Activated T-helper 2 cell treated with anti-CD3 and anti-CD28 coated beads, Interferon-gamma antibody, Interleukin-2, Interleukin-4, amounts not matched to agents 10 μg/mL and 5 μg/mL and 100 μg/mL, durations not matched to agents 14 hours and 24 hours and 36 hours (primary cell): ENCODE measurements at regions of chr6 and their contacts with region 1.

Region 1: GRCh38 chr6:170584181-170584953 is at the start of gene PDCD2:
- DNase-seq: peak; percentile 89
- H3K4me3 Mint-ChIP-seq: peak within 1 kb of the TSS; percentile 99
- H3K27ac Mint-ChIP-seq: peak within 1 kb of the TSS; percentile 90
- H3K4me1 Mint-ChIP-seq: peaks cover 28% of the 10 kb centered on the region
- H3K27me3 Mint-ChIP-seq: peaks cover 3% of the 10 kb centered on the region
- total RNA-seq, gene PDCD2: 117 and 124 TPM in 2 replicates

Region 2: GRCh38 chr6:170022971-170023619 is 561.3 kb before region 1 on chr6:
- intact Hi-C with region 1: no loop called
- DNase-seq: no peak
- H3K4me3 Mint-ChIP-seq: no peak overlapping the region
- H3K27ac Mint-ChIP-seq: no peak overlapping the region
- H3K4me1 Mint-ChIP-seq: no peaks in the 10 kb centered on the region
- H3K27me3 Mint-ChIP-seq: peaks cover 11% of the 10 kb centered on the region

Region 3: GRCh38 chr6:170306324-170307079 is 277.9 kb before region 1 on chr6 and contains the start of gene FAM120B:
- intact Hi-C with region 1: loop called (anchors 5 kb)
- DNase-seq: peak; percentile 96
- H3K4me3 Mint-ChIP-seq: peak within 1 kb of the TSS; percentile 95
- H3K27ac Mint-ChIP-seq: peak within 1 kb of the TSS; percentile 91
- H3K4me1 Mint-ChIP-seq: peaks cover 23% of the 10 kb centered on the region
- H3K27me3 Mint-ChIP-seq: peaks cover 25% of the 10 kb centered on the region
- total RNA-seq, gene FAM120B: 19.6 and 21.8 TPM in 2 replicates

Region 4: DNA sequence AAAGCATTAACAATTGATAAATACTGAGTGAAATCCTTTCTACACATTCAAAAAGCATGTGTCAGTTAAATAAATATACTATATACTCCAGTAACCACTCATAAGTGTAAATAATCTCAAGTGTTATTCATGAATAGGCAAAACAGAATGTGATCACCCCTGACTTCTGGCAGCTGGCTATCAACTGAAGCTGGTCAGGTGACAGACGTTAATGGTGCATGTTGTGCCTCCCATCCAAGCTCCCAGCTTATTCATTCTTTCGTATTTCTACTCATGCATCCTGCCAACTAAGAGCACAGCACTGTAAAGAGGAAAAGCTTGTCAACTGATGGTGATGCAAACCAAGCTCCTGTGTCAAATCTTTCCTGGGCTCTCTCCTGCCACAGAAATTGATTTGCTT is 39.0 kb before region 1 on chr6:
- intact Hi-C with region 1: no loop called
- DNase-seq: no peak
- H3K4me3 Mint-ChIP-seq: no peak overlapping the region
- H3K27ac Mint-ChIP-seq: no peak overlapping the region
- H3K4me1 Mint-ChIP-seq: peaks cover 29% of the 10 kb centered on the region
- H3K27me3 Mint-ChIP-seq: no peaks in the 10 kb centered on the region